Breast epithelium (tissue), 4 donors: ENCODE measurements at regions of chr17 and their contacts with region 1.

Region 1: GRCh38 chr17:11719856-11720255 is 121.6 kb downstream of the DNAH9 start:
- DNase-seq: no peak
- H3K4me3 ChIP-seq: no peak overlapping the region
- H3K27ac ChIP-seq: no peak overlapping the region
- H3K4me1 ChIP-seq: no peaks in the 10 kb centered on the region
- H3K27me3 ChIP-seq: no peaks in the 10 kb centered on the region
- CTCF ChIP-seq: no peak
- POLR2A ChIP-seq: no peak

Region 2: DNA sequence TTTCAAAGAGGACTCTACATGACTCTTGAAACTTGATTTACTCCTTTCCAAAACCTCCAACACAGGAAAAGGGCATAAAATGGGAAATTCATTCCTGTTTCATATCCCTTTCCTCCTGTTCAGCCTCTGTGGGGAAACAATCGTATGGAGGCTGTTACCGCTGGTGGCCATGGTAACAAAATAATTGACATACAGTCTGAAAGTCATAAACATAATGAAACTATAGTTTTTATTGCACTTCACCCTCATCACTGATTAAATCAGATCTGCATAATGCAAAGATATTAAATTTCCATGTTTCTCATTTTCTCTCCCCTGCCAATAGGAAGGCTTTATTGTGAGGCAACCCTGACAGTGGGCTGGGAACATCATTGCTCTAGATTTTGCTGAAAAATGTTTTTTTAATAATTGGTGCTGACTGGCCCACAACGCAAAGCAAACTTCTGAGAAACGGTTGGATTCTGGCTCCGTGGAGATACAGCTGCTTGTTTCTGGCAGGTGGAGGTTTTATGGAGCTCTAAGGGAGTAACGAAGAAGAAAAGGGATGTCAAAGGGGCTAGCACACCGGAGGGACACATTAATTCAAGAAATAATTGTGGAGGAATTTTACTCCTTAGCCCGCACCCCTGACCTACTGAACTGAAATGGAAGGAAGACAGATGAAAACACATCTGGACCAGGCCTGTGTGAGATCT is 633.1 kb before region 1 on chr17:
- intact Hi-C with region 1: loop called (anchors 5 kb)
- DNase-seq: no peak
- H3K4me3 ChIP-seq: no peak overlapping the region
- H3K27ac ChIP-seq: no peak overlapping the region
- H3K4me1 ChIP-seq: no peaks in the 10 kb centered on the region
- H3K27me3 ChIP-seq: peaks cover 0 to 4% of the 10 kb centered on the region in 2 donors
- CTCF ChIP-seq: no peak
- POLR2A ChIP-seq: no peak

Region 3: DNA sequence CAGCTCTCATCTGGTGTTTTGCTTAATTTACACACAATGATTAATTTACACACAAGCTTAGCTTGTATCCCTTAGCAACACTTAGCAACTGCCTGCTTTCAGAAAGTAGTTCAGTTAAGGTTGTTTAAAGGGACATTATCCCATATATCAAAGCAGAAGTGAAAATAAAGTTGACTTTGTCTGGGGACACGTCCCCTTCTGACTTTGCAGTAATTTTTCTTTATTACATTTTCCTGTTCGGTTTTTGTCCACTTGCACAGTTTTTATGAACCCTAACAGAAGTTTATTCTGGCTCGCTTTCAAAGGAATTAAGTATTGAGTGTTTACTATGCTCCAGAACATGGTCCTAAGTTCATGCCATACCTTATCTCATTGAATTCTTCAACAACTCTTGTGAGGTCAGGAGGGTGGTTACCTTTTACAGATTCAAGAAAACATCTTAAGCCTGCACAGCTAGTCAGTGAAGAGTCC is 1111.0 kb after region 1 on chr17:
- intact Hi-C with region 1: loop called (anchors 10 kb)
- DNase-seq: no peak
- H3K4me3 ChIP-seq: no peak overlapping the region
- H3K27ac ChIP-seq: no peak overlapping the region
- H3K4me1 ChIP-seq: no peaks in the 10 kb centered on the region
- H3K27me3 ChIP-seq: no peaks in the 10 kb centered on the region
- CTCF ChIP-seq: no peak
- POLR2A ChIP-seq: no peak